ENCODE measurements at regions of chr21 and their contacts with region 1.

Region 1: GRCh38 chr21:41425954-41426675 is at the start of gene MX1:
- DNase-seq: peak; percentile 89
- H3K4me3 Mint-ChIP-seq: peak within 1 kb of the TSS; percentile 96
- H3K27ac Mint-ChIP-seq: peak within 1 kb of the TSS; percentile 96
- H3K4me1 Mint-ChIP-seq: peaks cover 82% of the 10 kb centered on the region
- H3K27me3 Mint-ChIP-seq: no peaks in the 10 kb centered on the region
- total RNA-seq, gene MX1: 89.4 and 92.8 TPM in 2 replicates

Region 2: DNA sequence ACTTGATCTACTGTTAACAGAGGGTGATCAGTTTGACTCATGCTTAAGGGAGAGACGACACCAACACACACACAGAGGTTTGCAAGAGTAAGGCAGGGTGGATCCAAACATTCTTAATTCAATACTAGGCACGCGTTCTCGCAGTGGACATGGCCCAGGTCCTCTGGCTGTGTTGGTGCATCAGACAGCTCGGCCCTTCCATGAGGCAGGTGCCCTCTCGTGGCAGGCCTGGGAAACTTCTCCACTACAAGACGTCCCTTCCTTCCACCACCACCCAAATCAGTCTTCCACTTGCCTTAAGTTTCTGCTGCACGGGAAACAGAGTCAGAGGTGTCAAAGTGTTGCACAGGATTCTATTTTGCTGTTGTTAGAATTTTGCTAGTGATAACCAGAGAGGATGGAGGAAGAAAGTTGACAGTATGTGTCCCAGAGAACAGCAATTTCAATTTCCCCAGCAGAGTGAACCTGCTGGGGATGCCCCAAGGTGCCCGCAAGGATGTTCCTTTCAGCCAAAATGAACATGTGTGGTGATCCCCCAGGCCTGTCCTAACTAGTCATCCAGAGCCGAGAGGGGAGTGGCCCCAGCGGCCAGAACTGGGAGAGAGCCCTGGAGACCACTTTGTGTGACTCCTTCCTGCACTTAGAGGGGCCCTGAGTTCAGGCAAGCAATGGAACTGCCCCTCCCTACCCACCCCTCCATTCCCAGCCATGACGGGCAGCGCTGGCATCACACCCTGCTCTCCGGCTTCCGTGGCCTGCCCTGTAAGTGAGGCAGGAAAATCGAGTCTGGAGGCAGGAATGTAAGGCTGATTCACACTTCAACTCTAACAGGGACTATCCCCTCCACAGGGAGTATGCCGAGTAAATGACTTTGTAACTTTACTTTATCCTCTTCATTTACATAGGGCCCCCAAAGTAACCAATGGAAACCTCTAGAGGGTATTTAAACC is 34.7 kb after region 1 on chr21:
- intact Hi-C with region 1: no loop called
- DNase-seq: peak; percentile 9
- H3K4me3 Mint-ChIP-seq: no peak overlapping the region
- H3K27ac Mint-ChIP-seq: no peak overlapping the region
- H3K4me1 Mint-ChIP-seq: peaks cover 11% of the 10 kb centered on the region
- H3K27me3 Mint-ChIP-seq: no peaks in the 10 kb centered on the region

Region 3: GRCh38 chr21:41564871-41565274 is 138.8 kb after region 1 on chr21:
- intact Hi-C with region 1: loop called (anchors 1 kb)
- DNase-seq: peak; percentile 19
- H3K4me3 Mint-ChIP-seq: no peak overlapping the region
- H3K27ac Mint-ChIP-seq: peak overlapping the region; percentile 45
- H3K4me1 Mint-ChIP-seq: peaks cover 8% of the 10 kb centered on the region
- H3K27me3 Mint-ChIP-seq: peaks cover 4% of the 10 kb centered on the region

Region 4: DNA sequence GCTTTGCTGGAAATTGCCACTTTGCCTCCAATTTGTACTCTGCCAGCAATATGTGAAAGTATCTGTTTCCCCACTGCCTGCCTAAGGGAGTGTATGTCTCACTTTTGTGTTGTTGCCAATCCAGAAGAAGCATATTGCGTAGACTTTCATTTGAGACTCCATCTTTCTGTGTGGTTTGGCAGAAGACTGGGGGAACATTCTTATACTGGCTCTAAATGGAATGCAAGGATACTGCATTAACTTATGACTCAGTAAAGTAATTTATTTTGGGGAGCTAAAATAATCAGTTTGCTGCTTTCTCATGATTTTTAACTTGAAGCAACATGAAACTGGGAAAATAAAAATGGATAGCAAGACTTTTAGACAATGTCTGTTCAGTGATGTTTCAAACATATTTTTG is 189.5 kb after region 1 on chr21:
- intact Hi-C with region 1: no loop called
- DNase-seq: no peak
- H3K4me3 Mint-ChIP-seq: no peak overlapping the region
- H3K27ac Mint-ChIP-seq: no peak overlapping the region
- H3K4me1 Mint-ChIP-seq: no peaks in the 10 kb centered on the region
- H3K27me3 Mint-ChIP-seq: peaks cover 8% of the 10 kb centered on the region

Measured in activated T-helper 1 cell treated with anti-CD3 and anti-CD28 coated beads, Interleukin-12 subunit alpha, Interleukin-12 subunit beta, Interleukin-2, Interleukin-4 antibody, amounts not matched to agents 30 ng/mL and 10 ng/mL and 1 ng/mL, durations not matched to agents 14 hours and 24 hours and 36 hours (primary cell).